Common myeloid progenitor, CD34-positive (primary cell): ENCODE measurements at regions of chr12 and their contacts with region 1.

Region 1: DNA sequence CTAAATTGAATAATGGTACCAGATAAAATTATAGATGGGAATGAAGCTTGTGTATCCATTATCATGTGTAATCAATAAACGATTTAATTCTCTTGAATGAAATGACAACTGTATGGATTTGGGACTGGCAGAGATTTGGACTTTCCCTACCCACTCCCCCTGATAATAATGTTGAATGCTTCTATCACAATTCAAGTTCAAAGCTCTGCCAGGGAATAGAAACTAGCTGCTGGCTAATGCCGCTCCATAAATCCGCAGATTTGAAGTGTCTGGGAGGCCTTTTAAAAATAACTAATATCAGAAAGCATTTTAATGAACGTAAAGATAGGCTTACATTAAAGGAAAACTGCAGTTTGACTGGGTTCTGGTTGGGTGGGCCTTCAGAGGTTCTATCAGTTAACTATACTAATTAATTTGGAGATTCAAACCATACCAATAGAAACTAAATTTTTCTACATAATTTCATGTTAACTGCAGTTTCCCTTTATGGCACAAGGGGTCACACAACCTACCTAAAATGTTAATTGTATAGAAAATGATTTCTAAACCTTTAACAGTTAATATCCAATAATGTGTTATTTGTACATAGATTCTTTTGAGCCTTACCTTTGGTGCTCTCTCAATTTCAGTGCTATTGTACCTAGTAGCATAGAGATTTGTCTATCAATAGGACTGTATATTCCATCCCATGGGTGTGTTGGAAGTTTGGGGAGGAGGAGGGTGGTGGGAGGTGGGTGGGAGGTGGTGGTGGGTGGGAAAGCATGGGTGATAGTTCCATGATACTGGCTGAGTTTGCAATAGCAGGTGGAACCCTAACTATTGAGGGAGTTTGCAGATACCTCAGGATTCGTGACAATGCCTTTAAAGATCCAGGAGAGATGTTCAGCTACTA is 4.9 kb downstream of the HNRNPA1 start:
- DNase-seq: peak in 2 of 3 donors; percentile 50 to 55
- H3K4me3 ChIP-seq: peak overlapping the region in 5 of 7 experiments; percentile 26 to 68 (median 53)
- H3K27ac ChIP-seq: peak overlapping the region in 1 of 2 experiments; percentile 76
- H3K4me1 ChIP-seq: peaks cover 30 to 82% (median 66%) of the 10 kb centered on the region in 4 experiments
- H3K27me3 ChIP-seq: no peaks in the 10 kb centered on the region

Region 2: GRCh38 chr12:54300732-54301427 is 15.5 kb after region 1 on chr12 and contains the start of gene NFE2:
- CTCF ChIA-PET with region 1: interaction called, 890 read pairs
- POLR2A ChIA-PET with region 1: interaction called, 5 read pairs
- DNase-seq: peak in 2 of 3 donors; percentile 65 to 75
- H3K4me3 ChIP-seq: peak within 1 kb of the TSS; percentile 67 to 100 (median 96)
- H3K27ac ChIP-seq: peak within 1 kb of the TSS; percentile 91 to 95
- H3K4me1 ChIP-seq: peaks cover 42 to 84% (median 74%) of the 10 kb centered on the region in 4 experiments
- H3K27me3 ChIP-seq: no peaks in the 10 kb centered on the region

Region 3: GRCh38 chr12:54306925-54307741 is 21.7 kb after region 1 on chr12:
- CTCF ChIA-PET with region 1: interaction called, 890 read pairs
- POLR2A ChIA-PET with region 1: interaction called, 5 read pairs
- DNase-seq: peak; percentile 90 to 95 (median 94)
- H3K4me3 ChIP-seq: peak overlapping the region in 3 of 7 experiments; percentile 33 to 50 (median 37)
- H3K27ac ChIP-seq: peak overlapping the region; percentile 30 to 60
- H3K4me1 ChIP-seq: peaks cover 33 to 74% (median 64%) of the 10 kb centered on the region in 4 experiments
- H3K27me3 ChIP-seq: no peaks in the 10 kb centered on the region